A673 (cell line): ENCODE measurements at regions of chr6 and their contacts with region 1.

Region 1: DNA sequence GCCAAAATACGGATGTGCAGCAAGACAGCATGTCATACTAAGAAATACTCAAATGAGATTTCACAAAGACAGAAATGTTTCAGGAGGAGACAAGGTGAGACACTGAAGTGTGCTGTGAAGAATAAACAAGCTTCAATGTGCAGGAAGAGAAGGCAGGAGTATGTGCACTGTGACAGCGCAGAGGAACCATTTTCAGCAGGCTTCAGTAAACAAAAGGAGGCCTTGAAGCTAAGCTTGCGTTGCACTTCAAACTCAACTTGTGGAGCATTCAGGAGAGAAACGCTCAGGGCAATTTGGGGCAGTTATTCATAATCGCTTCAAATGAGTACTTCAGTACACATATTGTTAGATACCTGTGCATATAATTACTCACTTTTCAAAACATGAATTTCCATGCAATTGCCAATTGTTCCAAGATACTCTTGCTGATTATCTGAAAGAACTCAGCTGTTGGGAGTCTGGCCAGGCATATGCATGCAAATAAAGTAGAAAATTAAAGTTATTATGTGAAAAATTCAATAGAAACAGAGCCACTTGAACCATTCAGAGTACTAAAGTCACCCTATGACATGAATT is 234.2 kb upstream of the OPRM1 start:
- DNase-seq: no peak
- H3K4me3 ChIP-seq: no peak overlapping the region
- H3K27ac ChIP-seq: no peak overlapping the region
- H3K4me1 ChIP-seq: no peaks in the 10 kb centered on the region
- H3K27me3 ChIP-seq: no peaks in the 10 kb centered on the region
- CTCF ChIP-seq: no peak

Region 2: DNA sequence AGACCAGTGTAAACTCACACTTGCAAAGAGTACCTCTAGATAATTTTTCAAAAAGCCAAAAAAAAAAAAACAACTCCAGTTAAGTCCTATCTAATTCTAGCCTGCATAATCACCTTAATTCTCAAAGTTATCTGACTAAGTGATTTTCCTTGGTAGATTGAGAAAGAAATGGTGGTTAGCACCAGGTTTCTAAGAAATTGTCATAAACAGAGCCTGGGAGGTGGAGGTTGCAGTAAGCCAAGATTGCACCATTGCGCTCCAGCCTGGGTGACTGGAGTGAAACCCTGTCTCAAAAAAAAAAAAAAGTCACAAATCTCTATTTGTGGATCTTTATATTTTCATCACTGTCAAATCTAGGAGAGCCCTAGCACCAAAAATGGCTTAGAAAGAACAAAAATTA is 830.9 kb before region 1 on chr6:
- CTCF ChIA-PET with region 1: interaction called, 11 read pairs
- POLR2A ChIA-PET with region 1: no interaction called
- intact Hi-C with region 1: no loop called
- DNase-seq: no peak
- H3K4me3 ChIP-seq: no peak overlapping the region
- H3K27ac ChIP-seq: no peak overlapping the region
- H3K4me1 ChIP-seq: peaks cover 33% of the 10 kb centered on the region
- H3K27me3 ChIP-seq: no peaks in the 10 kb centered on the region
- CTCF ChIP-seq: no peak

Region 3: GRCh38 chr6:154605178-154605881 is 800.5 kb after region 1 on chr6:
- CTCF ChIA-PET with region 1: no interaction called
- POLR2A ChIA-PET with region 1: no interaction called
- intact Hi-C with region 1: no loop called
- DNase-seq: peak; percentile 34
- H3K4me3 ChIP-seq: no peak overlapping the region
- H3K27ac ChIP-seq: no peak overlapping the region
- H3K4me1 ChIP-seq: no peaks in the 10 kb centered on the region
- H3K27me3 ChIP-seq: no peaks in the 10 kb centered on the region
- CTCF ChIP-seq: no peak